AG04450 (cell line): ENCODE measurements at regions of chr2 and their contacts with region 1.

Region 1: GRCh38 chr2:46062637-46063412 is 234.4 kb upstream of the EPAS1 start:
- DNase-seq: peak; percentile 73
- H3K4me3 ChIP-seq: no peak overlapping the region
- H3K27ac ChIP-seq: no peak overlapping the region
- H3K27me3 ChIP-seq: no peaks in the 10 kb centered on the region
- CTCF ChIP-seq: peak; percentile 92

Region 2: GRCh38 chr2:45759310-45759851 is 303.4 kb before region 1 on chr2:
- CTCF ChIA-PET with region 1: no interaction called
- POLR2A ChIA-PET with region 1: no interaction called
- DNase-seq: no peak
- H3K4me3 ChIP-seq: peak overlapping the region; percentile 43
- H3K27ac ChIP-seq: peak overlapping the region; percentile 84
- H3K27me3 ChIP-seq: no peaks in the 10 kb centered on the region
- CTCF ChIP-seq: no peak

Region 3: GRCh38 chr2:46002507-46002883 is 60.3 kb before region 1 on chr2:
- CTCF ChIA-PET with region 1: interaction called, 10 read pairs
- POLR2A ChIA-PET with region 1: interaction called, 3 read pairs
- DNase-seq: no peak
- H3K4me3 ChIP-seq: no peak overlapping the region
- H3K27ac ChIP-seq: peak overlapping the region; percentile 84
- H3K27me3 ChIP-seq: no peaks in the 10 kb centered on the region
- CTCF ChIP-seq: no peak

Region 4: GRCh38 chr2:46029332-46029811 is 33.5 kb before region 1 on chr2:
- CTCF ChIA-PET with region 1: interaction called, 22 read pairs
- POLR2A ChIA-PET with region 1: no interaction called
- DNase-seq: peak; percentile 66
- H3K4me3 ChIP-seq: no peak overlapping the region
- H3K27ac ChIP-seq: peak overlapping the region; percentile 73
- H3K27me3 ChIP-seq: no peaks in the 10 kb centered on the region
- CTCF ChIP-seq: peak; percentile 39; the same call in 1 of the 2 replicates

Region 5: DNA sequence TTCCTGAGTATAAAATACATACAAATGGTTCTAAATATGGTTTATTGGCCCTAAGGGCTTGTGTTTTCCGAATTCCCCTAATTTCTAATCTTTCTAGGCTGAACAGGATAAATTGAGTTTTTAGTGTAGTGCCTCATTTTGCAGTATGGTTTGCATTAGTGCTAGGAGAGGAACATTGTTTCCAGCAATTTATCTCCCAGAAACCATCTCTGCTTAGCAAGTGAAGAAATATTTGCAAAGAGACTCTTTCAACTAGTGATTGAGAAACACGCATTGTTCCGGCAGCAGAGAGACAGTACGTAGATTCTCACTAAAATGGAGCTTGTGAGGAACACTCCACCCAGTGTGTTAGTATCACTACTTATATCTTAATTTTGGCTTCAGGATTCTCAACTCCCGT is 56.6 kb after region 1 on chr2:
- CTCF ChIA-PET with region 1: interaction called, 11 read pairs
- POLR2A ChIA-PET with region 1: no interaction called
- DNase-seq: no peak
- H3K4me3 ChIP-seq: no peak overlapping the region
- H3K27ac ChIP-seq: no peak overlapping the region
- H3K27me3 ChIP-seq: no peaks in the 10 kb centered on the region
- CTCF ChIP-seq: no peak

Region 6: DNA sequence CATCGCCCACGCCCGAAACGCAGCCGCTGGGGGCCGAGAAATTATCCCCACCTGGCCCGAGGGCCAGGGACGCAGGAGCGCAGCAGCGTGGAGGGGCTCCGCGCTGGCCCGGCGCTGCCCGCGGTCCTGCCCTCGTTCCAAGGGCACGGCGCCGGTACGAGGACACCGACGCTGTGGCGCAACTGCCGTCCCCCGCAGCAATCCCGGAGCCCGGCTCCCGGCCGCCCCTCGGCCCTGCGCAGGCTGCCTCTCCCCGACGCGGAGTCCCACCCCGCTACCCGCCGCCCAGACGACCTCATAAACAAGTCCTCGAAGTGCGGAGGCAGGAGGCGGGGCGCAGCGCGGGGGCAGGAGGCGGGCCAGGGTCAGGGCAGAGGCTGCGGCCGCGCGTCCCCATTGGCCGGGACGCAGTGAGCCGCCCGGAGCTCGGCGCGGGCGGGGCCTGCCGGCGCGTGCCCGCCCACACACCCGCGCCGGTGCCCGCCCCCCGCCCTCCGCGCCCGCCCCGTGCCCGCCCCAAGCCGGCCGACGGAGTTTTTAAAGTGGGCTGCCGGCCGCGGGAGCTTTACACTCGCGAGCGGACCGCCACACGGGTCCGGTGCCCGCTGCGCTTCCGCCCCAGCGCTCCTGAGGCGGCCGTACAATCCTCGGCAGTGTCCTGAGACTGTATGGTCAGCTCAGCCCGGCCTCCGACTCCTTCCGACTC is 234.2 kb after region 1 on chr2 and contains the start of gene EPAS1:
- CTCF ChIA-PET with region 1: interaction called, 14 read pairs
- POLR2A ChIA-PET with region 1: interaction called, 35 read pairs
- DNase-seq: peak; percentile 43
- H3K4me3 ChIP-seq: peak within 1 kb of the TSS; percentile 97
- H3K27ac ChIP-seq: peak within 1 kb of the TSS; percentile 73
- H3K27me3 ChIP-seq: no peaks in the 10 kb centered on the region
- CTCF ChIP-seq: no peak
- polyA plus RNA-seq, gene EPAS1: 506 and 522 TPM in 2 replicates

Region 7: DNA sequence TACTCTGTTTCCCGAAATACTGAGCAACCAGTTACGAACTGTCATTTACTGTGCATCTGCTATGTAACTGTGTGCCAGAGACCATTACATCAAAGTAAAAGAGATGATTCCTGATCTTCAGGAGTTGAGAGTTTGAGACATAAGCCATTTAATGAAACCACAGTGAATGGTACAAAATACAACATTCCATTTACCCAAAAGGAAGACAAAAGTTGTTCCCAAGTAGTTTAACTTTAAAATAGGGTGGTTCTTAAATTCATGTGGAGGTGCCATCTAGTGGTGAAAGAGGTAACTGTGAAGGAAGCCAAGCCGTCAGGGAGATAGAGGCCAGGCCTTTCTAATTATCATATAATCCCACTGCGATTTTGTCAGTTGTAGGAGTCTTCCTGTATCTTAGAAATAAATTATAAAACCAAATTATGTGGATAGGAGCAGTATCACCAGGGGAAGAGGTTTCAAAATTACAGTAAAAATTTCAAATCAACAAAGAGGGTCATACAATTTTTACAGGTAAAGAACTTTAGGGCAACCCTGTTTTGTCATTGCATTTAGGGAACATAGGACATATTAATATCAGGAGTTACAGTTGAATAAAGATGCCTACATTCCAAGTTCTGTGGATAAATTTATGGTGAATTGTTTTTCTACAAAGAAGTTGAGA is 302.1 kb after region 1 on chr2:
- CTCF ChIA-PET with region 1: interaction called, 30 read pairs
- POLR2A ChIA-PET with region 1: no interaction called
- DNase-seq: peak; percentile 20
- H3K4me3 ChIP-seq: no peak overlapping the region
- H3K27ac ChIP-seq: no peak overlapping the region
- H3K27me3 ChIP-seq: no peaks in the 10 kb centered on the region
- CTCF ChIP-seq: peak; percentile 81

Region 8: GRCh38 chr2:46632349-46632748 is 569.5 kb after region 1 on chr2:
- CTCF ChIA-PET with region 1: no interaction called
- POLR2A ChIA-PET with region 1: no interaction called
- DNase-seq: no peak
- H3K4me3 ChIP-seq: no peak overlapping the region
- H3K27ac ChIP-seq: no peak overlapping the region
- H3K27me3 ChIP-seq: no peaks in the 10 kb centered on the region
- CTCF ChIP-seq: peak; percentile 69